ENCODE measurements at regions of chr1 and their contacts with region 1.

Region 1: DNA sequence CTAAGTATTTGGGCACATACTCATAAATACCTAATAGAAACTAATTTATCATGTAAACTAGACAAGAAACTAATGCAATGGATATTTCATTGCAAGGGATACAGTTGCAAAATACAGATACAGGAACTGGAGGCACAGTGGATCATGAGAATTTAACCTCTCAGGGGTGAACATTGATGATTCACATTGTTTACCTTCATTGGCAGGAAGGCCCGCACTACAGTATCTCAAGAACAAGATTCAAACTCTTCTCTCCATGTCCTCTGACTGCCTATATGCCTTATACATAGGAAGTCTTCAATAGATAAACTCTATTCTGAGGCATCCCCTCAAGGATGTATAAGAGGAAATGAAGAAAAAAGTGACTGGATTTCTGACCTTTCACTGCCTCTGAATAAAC is 18.4 kb upstream of the PTBP2 start:
- DNase-seq: no peak
- ATAC-seq: no peak
- H3K4me3 ChIP-seq: no peak overlapping the region
- H3K27ac ChIP-seq: no peak overlapping the region
- H3K4me1 ChIP-seq: no peaks in the 10 kb centered on the region
- H3K27me3 ChIP-seq: no peaks in the 10 kb centered on the region
- CTCF ChIP-seq: no peak
- EP300 ChIP-seq: no peak
- POLR2A ChIP-seq: no peak
- RAD21 ChIP-seq: no peak

Region 2: DNA sequence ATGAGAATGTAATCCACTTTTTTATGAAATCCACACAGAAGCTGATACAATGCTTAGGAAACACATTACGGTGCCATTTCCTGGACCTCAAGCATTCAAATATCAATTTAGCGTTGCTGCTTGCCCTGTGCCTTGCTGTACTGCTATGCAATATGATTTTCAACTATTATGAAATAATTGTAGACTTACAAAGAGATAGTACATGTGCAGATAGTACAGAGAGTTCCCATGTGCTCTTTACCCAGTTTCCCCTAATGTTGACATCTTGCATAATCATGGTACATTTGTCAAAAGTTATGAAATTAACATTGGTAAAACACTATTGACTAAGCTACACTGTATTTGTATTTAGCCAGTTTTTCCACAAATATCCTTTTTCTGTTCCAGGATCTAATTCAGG is 19.3 kb before region 1 on chr1:
- CTCF ChIA-PET with region 1: no interaction called
- POLR2A ChIA-PET with region 1: no interaction called
- RAD21 ChIA-PET with region 1: no interaction called
- SMC1A ChIA-PET with region 1: no interaction called
- in situ Hi-C with region 1: no loop called
- intact Hi-C with region 1: loop called (anchors 1 kb)
- DNase-seq: no peak
- ATAC-seq: no peak
- H3K4me3 ChIP-seq: no peak overlapping the region
- H3K27ac ChIP-seq: no peak overlapping the region
- H3K4me1 ChIP-seq: no peaks in the 10 kb centered on the region
- H3K27me3 ChIP-seq: no peaks in the 10 kb centered on the region
- CTCF ChIP-seq: no peak
- EP300 ChIP-seq: no peak
- POLR2A ChIP-seq: no peak
- RAD21 ChIP-seq: no peak

Region 3: GRCh38 chr1:96872757-96873156 is 169.6 kb after region 1 on chr1:
- CTCF ChIA-PET with region 1: no interaction called
- POLR2A ChIA-PET with region 1: no interaction called
- RAD21 ChIA-PET with region 1: no interaction called
- SMC1A ChIA-PET with region 1: no interaction called
- in situ Hi-C with region 1: no loop called
- intact Hi-C with region 1: no loop called
- DNase-seq: no peak
- ATAC-seq: peak; percentile 34; the same call in 1 of the 3 replicates
- H3K4me3 ChIP-seq: no peak overlapping the region
- H3K27ac ChIP-seq: no peak overlapping the region
- H3K4me1 ChIP-seq: no peaks in the 10 kb centered on the region
- H3K27me3 ChIP-seq: no peaks in the 10 kb centered on the region
- CTCF ChIP-seq: no peak
- EP300 ChIP-seq: no peak
- POLR2A ChIP-seq: no peak
- RAD21 ChIP-seq: no peak

Measured in GM12878 (cell line).